K562 (cell line): ENCODE measurements at regions of chr6 and their contacts with region 1.

Region 1: DNA sequence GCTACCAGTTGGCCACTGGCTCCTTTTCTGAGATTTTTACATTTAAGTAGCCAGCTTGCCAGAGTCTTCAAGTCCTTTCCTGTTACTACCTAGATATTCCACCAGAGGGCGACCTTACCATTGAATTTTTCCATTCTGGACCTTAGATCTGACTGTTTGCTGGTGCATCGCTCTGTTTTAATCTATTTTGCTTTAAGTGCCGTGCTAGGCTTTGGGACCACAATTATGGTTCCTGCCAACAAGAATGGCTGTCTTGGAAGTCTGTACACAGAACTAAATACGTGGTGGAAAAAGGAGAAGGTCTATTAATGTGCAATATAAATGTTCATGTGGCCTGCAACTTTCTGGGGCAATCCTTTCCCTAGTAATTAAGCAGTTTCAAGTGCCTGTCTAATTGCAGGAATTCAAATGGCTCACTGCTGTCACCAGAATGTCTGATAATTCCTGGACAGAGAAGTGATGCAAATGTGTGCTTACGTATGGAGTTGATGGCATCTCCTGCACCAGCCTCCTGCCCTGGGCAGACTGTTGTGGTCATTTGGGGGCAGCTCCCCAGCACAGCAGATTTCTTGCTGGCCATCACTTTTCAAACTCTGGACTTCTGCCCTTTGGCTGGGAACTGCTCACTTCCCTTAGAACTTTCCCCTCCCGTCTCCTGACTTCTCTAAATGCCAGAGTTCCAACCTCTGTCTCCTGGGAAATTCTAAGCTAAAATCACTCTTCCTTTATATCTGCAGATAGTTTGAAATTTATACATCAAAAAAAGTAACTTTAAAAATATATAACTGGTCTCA is 5.6 kb upstream of the HLA-DOA start:
- DNase-seq: peak; percentile 67 to 79 (median 73)
- ATAC-seq: peak; percentile 88
- H3K4me3 ChIP-seq: no peak overlapping the region
- H3K27ac ChIP-seq: no peak overlapping the region
- H3K4me1 ChIP-seq: no peaks in the 10 kb centered on the region
- H3K27me3 ChIP-seq: peaks cover 28 to 37% of the 10 kb centered on the region in 2 experiments; a peak in 4 of 5 replicates
- CTCF ChIP-seq: peak; percentile 74 to 92 (median 77)
- EP300 ChIP-seq: no peak
- POLR2A ChIP-seq: no peak
- RAD21 ChIP-seq: peak; percentile 80 to 87

Region 2: GRCh38 chr6:33082702-33083101 is 67.7 kb after region 1 on chr6:
- CTCF ChIA-PET with region 1: interaction called, 18 read pairs
- POLR2A ChIA-PET with region 1: interaction called, 3 read pairs
- in situ Hi-C with region 1: loop called (anchors 5 kb)
- intact Hi-C with region 1: loop called (anchors 2 kb)
- DNase-seq: peak; percentile 29 to 57 (median 44)
- ATAC-seq: peak; percentile 90
- H3K4me3 ChIP-seq: no peak overlapping the region
- H3K27ac ChIP-seq: no peak overlapping the region
- H3K4me1 ChIP-seq: peaks cover 0 to 6% of the 10 kb centered on the region in 2 experiments; a peak in 2 of 5 replicates
- H3K27me3 ChIP-seq: peaks cover 39 to 67% of the 10 kb centered on the region in 2 experiments
- CTCF ChIP-seq: peak; percentile 71 to 82 (median 74)
- EP300 ChIP-seq: no peak
- POLR2A ChIP-seq: no peak
- RAD21 ChIP-seq: peak; percentile 52 to 75; a peak in 3 of 4 replicates

Region 3: GRCh38 chr6:33091957-33092356 is 76.9 kb after region 1 on chr6:
- CTCF ChIA-PET with region 1: interaction called, 19 read pairs
- POLR2A ChIA-PET with region 1: interaction called, 3 read pairs
- in situ Hi-C with region 1: loop called (anchors 5 kb)
- intact Hi-C with region 1: no loop called
- DNase-seq: peak in 3 of 4 experiments; percentile 36 to 64 (median 50)
- ATAC-seq: peak; percentile 94
- H3K4me3 ChIP-seq: no peak overlapping the region
- H3K27ac ChIP-seq: no peak overlapping the region
- H3K4me1 ChIP-seq: no peaks in the 10 kb centered on the region
- H3K27me3 ChIP-seq: peaks cover 0 to 39% of the 10 kb centered on the region in 2 experiments; a peak in 2 of 5 replicates
- CTCF ChIP-seq: peak; percentile 84 to 96 (median 90)
- EP300 ChIP-seq: no peak
- POLR2A ChIP-seq: no peak
- RAD21 ChIP-seq: peak in 1 of 2 experiments; percentile 62; a peak in 2 of 4 replicates

Region 4: GRCh38 chr6:33147807-33148666 is 133.0 kb after region 1 on chr6:
- CTCF ChIA-PET with region 1: interaction called, 6 read pairs
- POLR2A ChIA-PET with region 1: no interaction called
- in situ Hi-C with region 1: no loop called
- intact Hi-C with region 1: loop called (anchors 5 kb)
- DNase-seq: peak in 3 of 4 experiments; percentile 38 to 49 (median 48)
- ATAC-seq: peak; percentile 79
- H3K4me3 ChIP-seq: no peak overlapping the region
- H3K27ac ChIP-seq: no peak overlapping the region
- H3K4me1 ChIP-seq: no peaks in the 10 kb centered on the region
- H3K27me3 ChIP-seq: peaks cover 4 to 9% of the 10 kb centered on the region in 2 experiments; a peak in 4 of 5 replicates
- CTCF ChIP-seq: peak; percentile 65 to 87 (median 83); a peak in 5 of 6 replicates
- EP300 ChIP-seq: no peak
- POLR2A ChIP-seq: no peak
- RAD21 ChIP-seq: peak; percentile 72 to 87

Region 5: GRCh38 chr6:33172688-33173534 is 157.9 kb after region 1 on chr6:
- CTCF ChIA-PET with region 1: interaction called, 12 read pairs
- POLR2A ChIA-PET with region 1: interaction called, 5 read pairs
- in situ Hi-C with region 1: no loop called
- intact Hi-C with region 1: no loop called
- DNase-seq: peak; percentile 53 to 78 (median 72)
- ATAC-seq: peak; percentile 48
- H3K4me3 ChIP-seq: no peak overlapping the region
- H3K27ac ChIP-seq: no peak overlapping the region
- H3K4me1 ChIP-seq: no peaks in the 10 kb centered on the region
- H3K27me3 ChIP-seq: peaks cover 3 to 18% of the 10 kb centered on the region in 2 experiments; a peak in 4 of 5 replicates
- CTCF ChIP-seq: peak; percentile 86 to 89 (median 86)
- EP300 ChIP-seq: no peak
- POLR2A ChIP-seq: no peak
- RAD21 ChIP-seq: peak; percentile 78 to 85